Aorta (tissue), 5 donors: ENCODE measurements at regions of chr18 and their contacts with region 1.

Region 1: GRCh38 chr18:37429791-37430190 is 135.8 kb downstream of the CELF4 start:
- DNase-seq: no peak
- ATAC-seq: no peak
- H3K4me3 ChIP-seq: no peak overlapping the region
- H3K27ac ChIP-seq: no peak overlapping the region
- H3K4me1 ChIP-seq: no peaks in the 10 kb centered on the region
- H3K27me3 ChIP-seq: no peaks in the 10 kb centered on the region

Region 2: DNA sequence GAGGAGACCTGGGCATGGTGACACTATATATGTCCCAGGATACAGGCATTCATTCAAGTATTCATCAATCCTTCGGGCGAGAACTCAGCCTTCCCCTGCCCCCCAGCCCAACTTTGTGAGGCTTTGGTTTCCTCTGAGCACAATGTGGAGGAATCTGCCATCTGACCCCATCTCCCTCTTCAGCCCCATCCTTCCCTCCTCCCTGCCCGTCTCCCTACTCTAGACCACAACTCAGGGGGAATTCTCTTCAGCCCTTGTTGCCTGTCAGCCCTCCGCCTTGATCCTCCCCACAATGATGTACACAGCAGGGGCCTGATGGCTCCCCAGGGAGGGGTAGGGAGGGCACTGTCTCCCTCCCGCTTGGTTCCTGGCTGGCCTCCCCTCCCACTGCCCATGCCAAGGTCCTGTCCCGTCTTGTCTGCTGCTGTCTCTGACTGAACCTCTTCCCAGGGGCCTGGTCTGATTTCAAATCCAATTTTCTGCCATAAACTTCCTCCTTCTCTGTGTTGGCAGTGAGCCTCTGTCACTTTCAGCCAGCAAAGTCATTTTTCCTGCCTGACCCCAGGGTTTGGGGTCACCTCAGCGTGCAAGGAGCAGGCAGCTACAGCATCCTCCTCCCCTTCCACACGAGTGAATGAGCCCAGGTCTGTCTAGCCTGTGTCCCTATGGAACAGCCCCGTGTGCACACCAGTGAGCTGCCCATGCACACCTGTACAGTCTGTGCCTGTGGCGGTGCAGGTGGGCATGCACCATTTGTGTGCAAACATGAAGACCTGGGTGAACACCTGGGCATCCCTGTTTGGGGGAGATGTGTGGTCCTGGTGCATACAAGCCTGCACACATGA is 61.5 kb before region 1 on chr18:
- intact Hi-C with region 1: no loop called
- DNase-seq: no peak
- ATAC-seq: no peak
- H3K4me3 ChIP-seq: no peak overlapping the region
- H3K27ac ChIP-seq: no peak overlapping the region
- H3K4me1 ChIP-seq: no peaks in the 10 kb centered on the region
- H3K27me3 ChIP-seq: no peaks in the 10 kb centered on the region

Region 3: DNA sequence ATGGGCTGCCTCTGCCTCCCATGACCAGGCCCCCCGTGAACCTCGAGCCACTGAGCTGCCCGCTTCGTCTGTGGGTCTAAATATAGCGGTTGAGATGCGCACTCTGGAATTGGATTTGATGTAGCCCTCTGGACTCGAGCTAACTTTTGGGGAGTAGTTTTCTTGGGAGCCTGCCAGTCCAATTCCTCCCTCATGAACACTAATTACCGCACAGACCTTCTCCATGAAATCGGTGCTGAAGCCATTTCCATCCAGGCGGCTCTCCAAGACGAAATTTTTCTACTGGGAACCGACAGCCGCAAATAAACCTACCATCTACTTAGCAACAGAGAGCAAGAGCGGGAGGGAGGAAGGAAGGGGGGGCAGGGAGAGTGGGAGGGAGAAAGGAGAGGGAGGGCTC is 72.2 kb after region 1 on chr18:
- intact Hi-C with region 1: loop called in 1 of 2 experiments (anchors 10 kb)
- DNase-seq: no peak
- ATAC-seq: no peak
- H3K4me3 ChIP-seq: no peak overlapping the region
- H3K27ac ChIP-seq: no peak overlapping the region
- H3K4me1 ChIP-seq: no peaks in the 10 kb centered on the region
- H3K27me3 ChIP-seq: no peaks in the 10 kb centered on the region

Region 4: GRCh38 chr18:37778417-37779165 is 348.8 kb after region 1 on chr18:
- intact Hi-C with region 1: no loop called
- DNase-seq: peak; percentile 65 to 83
- ATAC-seq: peak; percentile 49
- H3K4me3 ChIP-seq: no peak overlapping the region
- H3K27ac ChIP-seq: no peak overlapping the region
- H3K4me1 ChIP-seq: no peaks in the 10 kb centered on the region
- H3K27me3 ChIP-seq: no peaks in the 10 kb centered on the region